ENCODE measurements at regions of chr1 and their contacts with region 1.

Region 1: DNA sequence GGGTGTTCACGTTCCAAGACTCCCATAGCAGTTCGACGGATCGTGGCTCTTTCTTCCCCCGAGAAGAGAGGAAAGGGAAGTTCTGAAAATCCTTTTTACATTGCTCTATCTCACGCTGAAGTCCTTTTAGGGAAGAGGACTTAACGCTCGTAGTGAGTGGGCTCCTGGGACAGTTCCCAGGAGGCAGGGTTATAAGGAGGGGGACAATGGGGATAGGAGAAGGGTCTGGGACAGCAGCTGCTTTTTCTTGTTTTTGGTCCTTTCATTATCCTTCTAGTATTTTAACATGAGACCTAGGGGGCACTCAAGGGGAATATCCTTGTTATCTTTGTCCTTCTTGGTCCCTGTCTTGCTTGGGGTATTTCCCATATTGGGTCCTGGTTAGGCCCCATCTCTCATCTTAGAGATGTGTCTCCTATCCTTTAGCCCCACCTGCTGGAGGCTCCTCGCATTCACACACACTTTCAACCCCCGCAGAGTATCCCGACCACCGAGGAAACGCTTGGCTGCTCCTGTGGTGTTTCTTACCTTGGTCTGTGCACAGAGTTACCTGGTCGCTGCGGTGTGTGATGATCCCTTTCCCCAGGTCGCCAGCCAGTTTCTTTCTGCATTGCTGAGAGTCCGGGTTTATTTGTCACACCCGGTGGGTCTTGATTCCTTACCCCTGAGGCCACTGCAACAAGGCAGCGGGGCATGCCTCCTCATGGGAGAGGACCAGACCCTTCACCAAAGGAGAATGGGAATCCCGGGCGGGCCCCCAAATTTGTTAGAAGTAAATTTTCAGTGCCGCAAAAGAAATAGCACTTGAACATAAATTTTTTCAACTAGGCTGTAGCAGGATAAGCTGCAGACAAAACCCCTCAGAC is 29.7 kb downstream of the SCCPDH start:
- DNase-seq: peak; percentile 80
- H3K4me3 Mint-ChIP-seq: no peak overlapping the region
- H3K27ac Mint-ChIP-seq: no peak overlapping the region
- H3K4me1 Mint-ChIP-seq: no peaks in the 10 kb centered on the region
- H3K27me3 Mint-ChIP-seq: no peaks in the 10 kb centered on the region
- CTCF ChIP-seq: peak; percentile 81

Region 2: GRCh38 chr1:246012341-246012740 is 741.6 kb before region 1 on chr1:
- CTCF ChIA-PET with region 1: no interaction called
- intact Hi-C with region 1: loop called (anchors 10 kb)
- DNase-seq: peak; percentile 17
- H3K4me3 Mint-ChIP-seq: no peak overlapping the region
- H3K27ac Mint-ChIP-seq: no peak overlapping the region
- H3K4me1 Mint-ChIP-seq: no peaks in the 10 kb centered on the region
- H3K27me3 Mint-ChIP-seq: no peaks in the 10 kb centered on the region
- CTCF ChIP-seq: peak; percentile 55

Region 3: DNA sequence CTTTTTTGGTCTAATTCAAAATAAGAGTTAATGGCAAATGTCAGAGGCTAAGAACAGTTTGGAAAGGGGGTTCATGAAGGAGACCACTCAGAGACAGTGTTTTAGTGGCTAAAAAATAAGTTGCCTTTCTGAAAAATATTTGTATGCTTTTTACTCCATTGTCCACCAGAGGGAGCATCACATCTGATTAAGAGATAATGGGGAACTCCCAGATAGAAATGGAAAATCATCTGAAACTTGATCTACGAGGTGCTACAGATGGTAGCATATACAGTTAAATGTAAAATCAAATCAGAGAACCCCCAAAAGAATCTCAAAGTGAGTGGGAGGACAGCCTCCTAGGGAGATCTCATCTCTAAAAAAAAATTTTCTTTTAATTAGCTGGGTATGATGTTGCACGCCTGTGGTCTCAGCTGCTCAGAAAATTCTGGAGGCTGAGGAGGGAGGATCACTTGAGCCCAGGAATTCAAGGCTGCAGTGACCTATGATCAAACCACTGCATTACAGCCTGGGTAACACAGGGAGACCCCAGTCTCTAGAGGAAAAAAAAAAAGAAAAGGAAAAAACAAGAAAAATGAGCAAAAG is 256.5 kb before region 1 on chr1:
- CTCF ChIA-PET with region 1: interaction called, 3 read pairs
- intact Hi-C with region 1: loop called (anchors 1 kb)
- DNase-seq: peak; percentile 44
- H3K4me3 Mint-ChIP-seq: no peak overlapping the region
- H3K27ac Mint-ChIP-seq: no peak overlapping the region
- H3K4me1 Mint-ChIP-seq: peaks cover 22% of the 10 kb centered on the region
- H3K27me3 Mint-ChIP-seq: no peaks in the 10 kb centered on the region
- CTCF ChIP-seq: peak; percentile 46

Region 4: DNA sequence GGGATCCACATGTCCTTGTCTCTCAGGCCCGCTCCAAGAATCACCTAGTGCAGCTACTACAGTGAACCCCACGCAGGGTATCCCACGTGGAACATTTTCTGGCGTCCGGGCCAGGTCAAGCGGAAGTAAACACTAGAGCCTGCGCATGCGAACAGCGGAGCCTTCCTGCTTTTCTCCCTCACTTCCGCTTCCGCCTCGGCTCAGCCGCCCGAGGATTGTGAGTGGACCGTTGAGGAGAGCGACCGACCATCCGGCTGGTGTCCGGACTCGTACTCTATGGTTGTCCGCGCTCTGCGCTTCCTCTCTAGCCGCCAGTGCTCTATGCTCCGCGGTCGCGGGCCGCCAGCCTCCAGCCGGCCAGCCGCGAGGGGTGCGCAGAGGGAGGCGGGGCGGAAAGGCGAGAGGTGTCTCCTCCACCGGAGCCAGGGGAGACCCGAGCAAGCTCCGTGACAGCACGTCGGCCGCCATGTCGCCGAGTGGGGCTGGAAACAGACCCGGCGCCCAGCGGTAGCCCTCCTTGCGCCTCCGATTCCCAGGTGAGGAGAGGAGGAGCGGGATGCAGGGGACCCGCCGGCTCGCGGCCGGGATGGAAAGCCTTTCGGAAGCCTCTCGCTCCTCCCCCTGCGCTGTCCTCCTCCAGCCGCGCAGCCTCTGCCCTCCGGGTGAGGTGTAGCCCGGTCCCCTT is 187.6 kb before region 1 on chr1 and contains the starts of genes CNST and TFB2M:
- CTCF ChIA-PET with region 1: no interaction called
- intact Hi-C with region 1: loop called (anchors 10 kb)
- DNase-seq: peak; percentile 99
- H3K4me3 Mint-ChIP-seq: peak within 1 kb of the TSS; percentile 97
- H3K27ac Mint-ChIP-seq: peak within 1 kb of the TSS; percentile 74
- H3K4me1 Mint-ChIP-seq: peaks cover 20% of the 10 kb centered on the region
- H3K27me3 Mint-ChIP-seq: no peaks in the 10 kb centered on the region
- CTCF ChIP-seq: no peak
- total RNA-seq, gene CNST: 21.7 and 22.5 TPM in 2 replicates
- total RNA-seq, gene TFB2M: 21.8 and 23.0 TPM in 2 replicates

Region 5: DNA sequence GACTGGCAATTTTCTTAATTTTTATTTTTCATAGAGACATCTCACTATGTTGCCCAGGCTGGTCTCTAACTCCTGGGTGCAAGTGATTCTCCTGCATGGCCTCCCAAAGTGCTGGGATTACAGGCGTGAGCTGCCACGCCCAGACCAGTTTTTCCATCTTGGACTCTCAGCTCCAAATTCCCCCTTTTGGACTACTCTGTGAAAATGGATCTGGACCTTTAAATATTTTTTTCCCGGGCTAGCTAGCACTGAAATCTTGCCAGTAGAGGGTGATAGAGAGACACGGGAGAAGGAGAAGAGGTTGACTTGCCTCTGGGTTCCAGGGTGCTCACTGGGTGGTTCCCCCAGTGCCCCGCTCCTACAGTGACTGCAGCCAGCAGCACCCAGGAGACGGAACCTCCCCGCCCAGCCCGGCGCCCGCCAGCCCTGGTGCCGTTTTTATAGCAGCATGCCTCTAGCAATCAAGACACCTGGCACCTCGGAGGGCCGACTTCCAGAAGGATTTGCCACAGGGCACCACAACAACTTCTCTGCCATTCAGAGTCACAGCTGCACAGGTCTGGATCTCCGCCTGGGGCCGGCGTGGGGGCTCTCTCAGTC is 64.4 kb before region 1 on chr1:
- CTCF ChIA-PET with region 1: no interaction called
- intact Hi-C with region 1: loop called (anchors 1 kb)
- DNase-seq: peak; percentile 69
- H3K4me3 Mint-ChIP-seq: peak overlapping the region; percentile 65
- H3K27ac Mint-ChIP-seq: no peak overlapping the region
- H3K4me1 Mint-ChIP-seq: peaks cover 10% of the 10 kb centered on the region
- H3K27me3 Mint-ChIP-seq: no peaks in the 10 kb centered on the region
- CTCF ChIP-seq: peak; percentile 83

Region 6: DNA sequence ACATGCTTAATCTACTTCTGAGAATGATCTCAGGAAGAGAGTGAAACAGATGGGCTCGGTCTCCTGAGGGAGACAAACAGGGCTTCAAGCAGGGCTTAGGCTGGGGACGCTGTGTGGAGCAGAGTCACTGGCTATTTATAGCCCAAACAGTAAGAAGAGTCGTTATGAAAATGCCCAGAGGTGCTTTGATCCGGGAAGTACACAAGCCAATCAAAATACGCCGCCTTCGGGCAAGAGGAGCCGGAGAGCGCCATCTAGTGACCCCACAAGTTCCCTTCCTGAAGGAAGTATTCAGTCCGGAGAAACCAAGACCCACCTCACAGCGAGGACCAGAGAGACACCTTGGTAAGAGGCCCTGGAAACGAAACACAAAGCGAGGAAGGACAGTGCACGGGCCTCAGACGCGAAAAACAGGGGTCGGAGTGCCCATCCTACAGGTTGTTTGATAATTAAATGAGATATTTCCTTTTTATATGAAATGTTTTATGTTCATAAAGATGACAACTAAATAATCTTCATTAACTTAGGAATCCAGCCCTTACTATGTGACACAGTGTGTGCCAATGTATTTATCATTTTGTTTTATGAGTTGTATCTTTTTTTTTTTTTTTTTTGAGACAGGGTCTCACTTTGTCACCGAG is 54.7 kb before region 1 on chr1:
- CTCF ChIA-PET with region 1: no interaction called
- intact Hi-C with region 1: loop called (anchors 2 kb)
- DNase-seq: peak; percentile 90
- H3K4me3 Mint-ChIP-seq: peak overlapping the region; percentile 46
- H3K27ac Mint-ChIP-seq: peak overlapping the region; percentile 43
- H3K4me1 Mint-ChIP-seq: peaks cover 18% of the 10 kb centered on the region
- H3K27me3 Mint-ChIP-seq: no peaks in the 10 kb centered on the region
- CTCF ChIP-seq: peak; percentile 81

Measured in Calu3 (cell line).